RWPE1 (cell line): ENCODE measurements at regions of chr6 and their contacts with region 1.

Region 1: GRCh38 chr6:33620856-33621710 is at the start of gene ITPR3:
- DNase-seq: peak; percentile 90
- H3K27ac ChIP-seq: peak within 1 kb of the TSS; percentile 98
- CTCF ChIP-seq: no peak

Region 2: GRCh38 chr6:33633462-33634158 is 12.5 kb after region 1 on chr6:
- CTCF ChIA-PET with region 1: interaction called, 17 read pairs
- POLR2A ChIA-PET with region 1: no interaction called
- DNase-seq: peak; percentile 75
- H3K27ac ChIP-seq: peak overlapping the region; percentile 88
- CTCF ChIP-seq: no peak

Region 3: DNA sequence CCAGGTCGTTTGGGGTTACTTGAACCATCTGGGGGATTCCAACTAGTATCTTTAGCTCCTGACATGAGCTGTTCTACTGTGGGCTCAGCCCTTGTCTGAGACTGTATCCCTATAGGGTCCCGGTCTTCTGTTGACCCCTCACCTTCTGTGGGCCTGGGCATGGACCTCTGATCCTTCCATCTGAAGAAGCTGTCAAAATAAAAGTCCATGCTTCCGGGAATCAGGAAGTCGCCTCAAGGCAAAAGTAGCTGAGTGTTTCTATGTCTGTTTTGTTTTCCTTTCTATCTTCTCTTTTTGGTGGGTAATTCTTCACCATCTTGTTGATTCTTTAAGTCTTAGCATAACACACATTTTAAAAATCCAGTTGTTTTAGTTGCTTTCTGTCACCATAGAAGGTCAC is 30.3 kb after region 1 on chr6:
- CTCF ChIA-PET with region 1: interaction called, 12 read pairs
- POLR2A ChIA-PET with region 1: interaction called, 4 read pairs
- DNase-seq: no peak
- H3K27ac ChIP-seq: peak overlapping the region; percentile 15; the same call in 1 of the 2 replicates
- CTCF ChIP-seq: no peak